ENCODE measurements at regions of chr20 and their contacts with region 1.

Region 1: GRCh38 chr20:43916881-43917371 is 2.3 kb downstream of the TOX2 start:
- DNase-seq: peak; percentile 50
- H3K4me3 ChIP-seq: peak overlapping the region; percentile 64
- H3K27ac ChIP-seq: peak overlapping the region; percentile 89
- H3K4me1 ChIP-seq: peaks cover 40% of the 10 kb centered on the region
- H3K27me3 ChIP-seq: no peaks in the 10 kb centered on the region
- CTCF ChIP-seq: no peak

Region 2: GRCh38 chr20:43565758-43566104 is 351.2 kb before region 1 on chr20:
- CTCF ChIA-PET with region 1: no interaction called
- POLR2A ChIA-PET with region 1: no interaction called
- intact Hi-C with region 1: no loop called
- DNase-seq: no peak
- H3K4me3 ChIP-seq: no peak overlapping the region
- H3K27ac ChIP-seq: no peak overlapping the region
- H3K4me1 ChIP-seq: no peaks in the 10 kb centered on the region
- H3K27me3 ChIP-seq: no peaks in the 10 kb centered on the region
- CTCF ChIP-seq: no peak

Region 3: GRCh38 chr20:43893930-43894329 is 23.0 kb before region 1 on chr20:
- CTCF ChIA-PET with region 1: no interaction called
- POLR2A ChIA-PET with region 1: no interaction called
- intact Hi-C with region 1: no loop called
- DNase-seq: no peak
- H3K4me3 ChIP-seq: no peak overlapping the region
- H3K27ac ChIP-seq: no peak overlapping the region
- H3K4me1 ChIP-seq: no peaks in the 10 kb centered on the region
- H3K27me3 ChIP-seq: no peaks in the 10 kb centered on the region
- CTCF ChIP-seq: no peak

Region 4: DNA sequence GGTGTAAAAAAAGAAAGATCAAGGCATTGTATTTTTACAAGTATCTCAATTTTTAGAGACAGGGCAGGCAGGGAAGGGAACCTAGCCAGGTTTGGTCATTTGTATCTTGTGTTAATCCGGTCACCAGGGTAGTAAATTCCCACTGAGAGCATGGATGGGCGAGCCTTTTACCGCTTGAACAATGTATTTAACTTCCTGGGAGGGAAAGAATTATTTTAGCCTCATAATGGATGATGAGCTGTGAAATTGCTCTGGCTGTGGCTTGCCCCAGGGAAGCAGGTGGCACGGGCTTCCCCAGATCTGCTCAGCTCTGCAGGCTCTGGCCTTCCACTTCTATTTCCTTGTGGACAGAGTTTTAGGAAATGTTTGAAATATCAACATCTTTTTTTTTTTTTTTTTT is 70.6 kb after region 1 on chr20:
- CTCF ChIA-PET with region 1: interaction called, 11 read pairs
- POLR2A ChIA-PET with region 1: no interaction called
- intact Hi-C with region 1: no loop called
- DNase-seq: peak; percentile 74
- H3K4me3 ChIP-seq: no peak overlapping the region
- H3K27ac ChIP-seq: no peak overlapping the region
- H3K4me1 ChIP-seq: peaks cover 28% of the 10 kb centered on the region
- H3K27me3 ChIP-seq: no peaks in the 10 kb centered on the region
- CTCF ChIP-seq: no peak